GM12878 (cell line): ENCODE measurements at regions of chr10 and their contacts with region 1.

Region 1: GRCh38 chr10:101840741-101841453 is 2.7 kb downstream of the KCNIP2 start:
- DNase-seq: no peak
- ATAC-seq: peak; percentile 90
- H3K4me3 ChIP-seq: peak overlapping the region; percentile 81
- H3K27ac ChIP-seq: no peak overlapping the region
- H3K4me1 ChIP-seq: peaks cover 23% of the 10 kb centered on the region
- H3K27me3 ChIP-seq: no peaks in the 10 kb centered on the region
- CTCF ChIP-seq: peak; percentile 98 to 99 (median 98); a peak in 5 of 6 replicates
- EP300 ChIP-seq: no peak
- POLR2A ChIP-seq: no peak
- RAD21 ChIP-seq: peak; percentile 98

Region 2: GRCh38 chr10:101602761-101603398 is 238.0 kb before region 1 on chr10:
- CTCF ChIA-PET with region 1: interaction called, 5 read pairs
- POLR2A ChIA-PET with region 1: no interaction called
- RAD21 ChIA-PET with region 1: interaction called, 13 read pairs
- SMC1A ChIA-PET with region 1: interaction called, 4 read pairs
- in situ Hi-C with region 1: no loop called
- intact Hi-C with region 1: no loop called
- DNase-seq: peak; percentile 40
- ATAC-seq: peak; percentile 100
- H3K4me3 ChIP-seq: no peak overlapping the region
- H3K27ac ChIP-seq: no peak overlapping the region
- H3K4me1 ChIP-seq: no peaks in the 10 kb centered on the region
- H3K27me3 ChIP-seq: no peaks in the 10 kb centered on the region
- CTCF ChIP-seq: peak; percentile 93 to 98 (median 96); a peak in 5 of 6 replicates
- EP300 ChIP-seq: no peak
- POLR2A ChIP-seq: no peak
- RAD21 ChIP-seq: peak; percentile 94

Region 3: GRCh38 chr10:101858723-101859500 is 18.0 kb after region 1 on chr10:
- CTCF ChIA-PET with region 1: interaction called, 143 read pairs
- POLR2A ChIA-PET with region 1: interaction called, 7 read pairs
- RAD21 ChIA-PET with region 1: interaction called, 31 read pairs
- SMC1A ChIA-PET with region 1: interaction called, 37 read pairs
- in situ Hi-C with region 1: no loop called
- intact Hi-C with region 1: no loop called
- DNase-seq: peak; percentile 61
- ATAC-seq: peak; percentile 91
- H3K4me3 ChIP-seq: peak overlapping the region; percentile 28; the same call in 1 of the 2 replicates
- H3K27ac ChIP-seq: peak overlapping the region; percentile 83
- H3K4me1 ChIP-seq: peaks cover 32% of the 10 kb centered on the region
- H3K27me3 ChIP-seq: no peaks in the 10 kb centered on the region
- CTCF ChIP-seq: no peak
- EP300 ChIP-seq: peak in 1 of 2 experiments; percentile 37; a peak in 1 of 4 replicates
- POLR2A ChIP-seq: peak; percentile 45; the same call in 1 of the 2 replicates
- RAD21 ChIP-seq: no peak

Region 4: GRCh38 chr10:101903827-101904550 is 63.1 kb after region 1 on chr10:
- CTCF ChIA-PET with region 1: interaction called, 39 read pairs
- POLR2A ChIA-PET with region 1: interaction called, 3 read pairs
- RAD21 ChIA-PET with region 1: interaction called, 44 read pairs
- SMC1A ChIA-PET with region 1: interaction called, 24 read pairs
- in situ Hi-C with region 1: no loop called
- intact Hi-C with region 1: loop called (anchors 5 kb)
- DNase-seq: peak; percentile 88
- ATAC-seq: peak; percentile 77
- H3K4me3 ChIP-seq: peak overlapping the region; percentile 4; the same call in 1 of the 2 replicates
- H3K27ac ChIP-seq: peak overlapping the region; percentile 91
- H3K4me1 ChIP-seq: peaks cover 45% of the 10 kb centered on the region
- H3K27me3 ChIP-seq: no peaks in the 10 kb centered on the region
- CTCF ChIP-seq: 0 out of 6 replicates have a peak, but pooled peaks of 1 of the 3 experiments have one; percentile 0
- EP300 ChIP-seq: peak; percentile 71 to 92; a peak in 3 of 4 replicates
- POLR2A ChIP-seq: peak; percentile 44; the same call in 1 of the 2 replicates
- RAD21 ChIP-seq: no peak

Region 5: DNA sequence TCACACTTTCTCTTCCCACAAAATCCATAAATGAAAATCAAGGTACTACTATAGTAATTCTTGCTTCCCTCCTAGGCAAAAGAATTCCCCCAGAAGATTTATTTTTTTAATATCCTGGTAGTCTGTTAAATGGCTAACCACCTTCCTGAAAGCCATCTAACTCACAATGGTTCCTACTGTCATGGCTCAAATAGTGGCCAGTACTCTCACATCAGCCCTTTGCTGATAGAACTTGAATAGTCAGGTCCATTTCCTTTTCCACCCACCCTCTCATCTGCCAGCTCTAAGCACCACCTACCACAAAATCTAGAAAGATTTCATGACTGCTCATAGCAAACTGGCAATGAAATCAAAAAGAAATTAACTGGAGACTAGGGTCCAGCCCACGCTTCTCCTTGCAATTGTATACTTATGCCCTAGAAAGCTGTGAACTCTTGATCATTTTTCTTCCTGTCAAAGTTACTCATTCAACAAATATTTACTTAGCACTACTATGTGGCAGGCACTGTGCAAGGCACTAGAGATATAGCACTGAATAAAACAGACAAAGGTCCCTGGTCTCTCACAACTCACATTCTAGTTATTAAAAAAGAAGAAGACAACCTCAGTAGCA is 154.7 kb after region 1 on chr10:
- CTCF ChIA-PET with region 1: interaction called, 697 read pairs
- POLR2A ChIA-PET with region 1: no interaction called
- RAD21 ChIA-PET with region 1: interaction called, 538 read pairs
- SMC1A ChIA-PET with region 1: interaction called, 10 read pairs
- in situ Hi-C with region 1: no loop called
- intact Hi-C with region 1: no loop called
- DNase-seq: no peak
- ATAC-seq: no peak
- H3K4me3 ChIP-seq: no peak overlapping the region
- H3K27ac ChIP-seq: peak overlapping the region; percentile 13; the same call in 1 of the 2 replicates
- H3K4me1 ChIP-seq: peaks cover 21% of the 10 kb centered on the region
- H3K27me3 ChIP-seq: no peaks in the 10 kb centered on the region
- CTCF ChIP-seq: no peak
- EP300 ChIP-seq: no peak
- POLR2A ChIP-seq: no peak
- RAD21 ChIP-seq: no peak

Region 6: GRCh38 chr10:102064868-102065560 is 224.1 kb after region 1 on chr10 and contains the start of gene HPS6:
- CTCF ChIA-PET with region 1: interaction called, 159 read pairs
- POLR2A ChIA-PET with region 1: interaction called, 3 read pairs
- RAD21 ChIA-PET with region 1: interaction called, 82 read pairs
- SMC1A ChIA-PET with region 1: interaction called, 27 read pairs
- in situ Hi-C with region 1: loop called (anchors 5 kb)
- intact Hi-C with region 1: no loop called
- DNase-seq: peak; percentile 61
- ATAC-seq: peak; percentile 98
- H3K4me3 ChIP-seq: peak within 1 kb of the TSS; percentile 90
- H3K27ac ChIP-seq: peak within 1 kb of the TSS; percentile 73
- H3K4me1 ChIP-seq: peaks cover 7% of the 10 kb centered on the region
- H3K27me3 ChIP-seq: no peaks in the 10 kb centered on the region
- CTCF ChIP-seq: peak in 2 of 3 experiments; percentile 31 to 35; a peak in 3 of 6 replicates
- EP300 ChIP-seq: no peak
- POLR2A ChIP-seq: peak; percentile 89
- RAD21 ChIP-seq: no peak
- polyA plus RNA-seq, gene HPS6: 1.4 to 2.8 TPM

Region 7: DNA sequence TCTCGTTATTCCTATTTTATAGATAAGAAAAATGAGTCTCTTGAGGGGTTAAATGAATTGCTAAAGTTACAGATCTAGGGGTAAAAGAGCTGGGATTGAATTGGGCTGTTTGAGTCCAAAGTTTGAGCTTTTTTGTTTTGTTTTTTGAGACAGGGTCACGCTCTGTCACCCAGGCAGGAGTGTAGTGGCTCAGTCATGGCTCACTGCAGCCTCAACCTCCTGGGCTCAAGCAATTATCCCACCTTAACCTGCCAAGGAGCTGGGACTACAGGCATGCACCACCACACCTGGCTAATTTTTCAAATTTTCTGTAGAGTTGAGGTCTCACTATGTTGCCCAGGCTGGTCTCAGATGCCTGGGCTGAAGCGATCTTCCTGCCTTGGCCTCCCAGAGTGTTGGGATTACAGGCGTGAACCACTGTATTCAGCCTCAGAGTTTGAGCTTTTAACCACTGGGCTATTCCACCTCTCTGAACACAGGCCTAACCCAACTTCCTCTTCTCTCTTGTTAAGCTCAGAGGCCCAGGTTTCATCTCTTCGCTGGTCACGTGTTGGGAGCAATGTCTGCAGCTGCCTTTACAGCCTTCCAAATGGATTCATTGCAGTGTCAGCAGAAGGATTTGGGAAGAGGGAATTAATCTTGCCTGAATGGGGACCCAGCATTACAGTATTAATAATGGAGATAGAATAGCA is 670.8 kb after region 1 on chr10:
- CTCF ChIA-PET with region 1: no interaction called
- POLR2A ChIA-PET with region 1: no interaction called
- RAD21 ChIA-PET with region 1: no interaction called
- SMC1A ChIA-PET with region 1: no interaction called
- in situ Hi-C with region 1: no loop called
- intact Hi-C with region 1: no loop called
- DNase-seq: peak; percentile 48
- ATAC-seq: peak; percentile 99
- H3K4me3 ChIP-seq: peak overlapping the region; percentile 28; the same call in 1 of the 2 replicates
- H3K27ac ChIP-seq: peak overlapping the region; percentile 51
- H3K4me1 ChIP-seq: peaks cover 13% of the 10 kb centered on the region
- H3K27me3 ChIP-seq: no peaks in the 10 kb centered on the region
- CTCF ChIP-seq: no peak
- EP300 ChIP-seq: no peak
- POLR2A ChIP-seq: no peak
- RAD21 ChIP-seq: no peak